ENCODE measurements at regions of chr2 and their contacts with region 1.

Region 1: GRCh38 chr2:24421668-24422067 is 61.3 kb upstream of the ITSN2 start:
- DNase-seq: peak; percentile 70
- H3K4me3 Mint-ChIP-seq: no peak overlapping the region
- H3K27ac Mint-ChIP-seq: no peak overlapping the region
- H3K4me1 Mint-ChIP-seq: no peaks in the 10 kb centered on the region
- H3K27me3 Mint-ChIP-seq: peaks cover 18% of the 10 kb centered on the region

Region 2: GRCh38 chr2:24360050-24360962 is 61.4 kb before region 1 on chr2 and contains the start of gene ITSN2:
- CTCF ChIA-PET with region 1: no interaction called
- DNase-seq: peak; percentile 86
- H3K4me3 Mint-ChIP-seq: peak within 1 kb of the TSS; percentile 86
- H3K27ac Mint-ChIP-seq: peak within 1 kb of the TSS; percentile 93
- H3K4me1 Mint-ChIP-seq: peaks cover 28% of the 10 kb centered on the region
- H3K27me3 Mint-ChIP-seq: peaks cover 7% of the 10 kb centered on the region

Region 3: GRCh38 chr2:24409700-24410556 is 11.7 kb before region 1 on chr2:
- CTCF ChIA-PET with region 1: interaction called, 15 read pairs
- DNase-seq: peak; percentile 51
- H3K4me3 Mint-ChIP-seq: no peak overlapping the region
- H3K27ac Mint-ChIP-seq: no peak overlapping the region
- H3K4me1 Mint-ChIP-seq: no peaks in the 10 kb centered on the region
- H3K27me3 Mint-ChIP-seq: peaks cover 6% of the 10 kb centered on the region

Measured in activated naive CD4-positive, alpha-beta T cell treated with anti-CD3 and anti-CD28 coated beads, Interleukin-2, amount 10 ng/mL, durations not matched to agents 7 days and 5 days (primary cell).